Left ventricle myocardium superior (tissue), 1 donor: ENCODE measurements at regions of chr1 and their contacts with region 1.

Region 1: DNA sequence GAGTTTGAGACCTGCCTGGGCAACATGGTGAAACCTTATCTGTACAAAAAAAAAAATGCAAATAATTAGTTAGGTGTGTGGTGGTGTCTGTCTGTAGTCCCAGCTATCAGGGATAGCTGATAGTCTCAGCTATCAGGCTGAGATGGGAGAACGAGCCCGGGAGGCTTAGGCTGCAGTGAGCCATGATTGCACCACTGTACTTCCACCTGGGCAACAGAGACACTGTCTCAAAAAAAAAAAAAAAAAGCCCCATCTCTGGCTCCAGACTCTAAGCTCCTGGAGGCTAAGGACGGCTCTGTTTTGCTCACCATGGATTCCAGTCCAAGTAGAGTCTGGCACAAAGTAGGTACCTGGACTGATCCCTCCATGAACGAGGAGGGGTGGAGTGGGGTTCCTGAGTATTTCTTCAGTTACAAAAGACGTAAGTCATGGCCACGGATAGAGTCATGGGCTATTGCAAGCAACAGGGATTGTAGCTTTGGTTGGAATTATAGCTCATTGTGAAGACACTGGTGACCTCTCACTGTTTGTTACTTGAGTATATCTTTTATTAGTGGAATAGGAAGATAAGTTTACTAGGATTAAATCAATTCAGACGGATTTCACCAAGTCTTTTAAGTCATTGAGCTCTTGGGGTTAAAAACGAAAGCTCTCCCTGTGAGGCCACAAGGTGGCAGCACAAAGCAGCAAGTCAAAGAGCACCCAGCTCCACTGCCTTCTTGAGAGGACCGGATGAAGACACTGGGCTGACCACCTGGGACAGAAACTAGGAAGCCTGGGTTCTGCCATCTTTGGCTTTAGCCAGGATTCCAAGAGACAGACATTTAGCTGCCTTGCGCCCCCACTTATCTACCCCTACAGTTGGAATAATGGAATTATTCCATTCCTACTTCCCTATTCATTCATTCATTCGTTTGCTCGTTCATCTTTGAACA is 35.6 kb upstream of the TMEM61 start:
- DNase-seq: peak; percentile 77
- ATAC-seq: peak; percentile 79

Region 2: DNA sequence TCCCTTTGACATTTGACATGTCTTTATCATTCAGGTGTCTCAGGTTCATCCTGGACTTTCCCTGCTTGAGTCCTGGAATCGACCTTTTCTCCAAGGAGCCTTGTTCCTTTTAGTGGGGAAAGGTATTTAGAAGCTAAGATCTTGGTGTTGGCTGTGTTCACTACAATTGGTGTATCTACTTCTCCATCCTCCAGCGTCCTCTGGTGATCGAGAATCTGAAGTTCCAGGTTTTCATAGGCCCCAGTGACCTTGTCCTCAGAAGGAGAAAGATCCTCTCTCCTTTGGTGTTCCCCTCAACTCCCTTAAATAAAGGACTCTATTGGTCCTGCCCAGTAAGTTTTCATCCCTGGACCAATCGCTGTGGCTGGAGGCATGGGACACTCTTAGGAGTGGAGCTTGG is 281.2 kb before region 1 on chr1:
- intact Hi-C with region 1: no loop called
- DNase-seq: no peak
- ATAC-seq: no peak

Region 3: GRCh38 chr1:54698346-54698745 is 246.5 kb before region 1 on chr1:
- intact Hi-C with region 1: no loop called
- DNase-seq: no peak
- ATAC-seq: no peak

Region 4: DNA sequence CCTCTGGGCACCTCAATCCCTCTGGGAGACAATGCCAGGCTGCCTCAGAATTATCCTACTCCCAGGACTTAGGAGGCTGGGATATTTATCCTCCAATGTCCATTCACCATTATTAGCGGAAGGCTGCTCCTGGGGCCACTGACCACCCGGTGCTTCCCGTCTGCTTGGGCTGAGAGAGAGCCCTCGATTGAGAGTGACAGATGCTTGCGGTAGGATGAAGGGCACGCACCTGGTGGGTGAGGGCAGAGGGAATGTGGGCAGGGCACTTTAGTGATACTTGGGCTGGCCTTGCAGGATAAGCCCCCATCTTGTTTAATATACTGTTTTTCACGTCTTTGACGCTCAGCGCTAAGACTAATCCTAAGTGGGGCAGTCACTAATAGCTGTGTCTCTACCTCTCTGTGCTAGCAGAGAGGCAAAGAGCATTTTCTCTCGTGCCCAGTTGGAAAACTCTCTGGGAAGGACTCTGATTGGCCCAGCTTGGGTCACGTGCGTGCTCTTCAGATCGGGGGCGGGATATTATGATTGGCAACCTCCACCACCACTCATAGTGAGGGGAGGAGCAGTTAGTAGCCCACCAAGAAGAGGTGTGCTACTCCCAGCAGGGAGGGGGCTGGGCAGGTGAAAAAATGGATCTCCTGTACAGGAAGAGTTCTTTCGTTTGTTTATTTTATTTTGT is 169.9 kb before region 1 on chr1:
- intact Hi-C with region 1: no loop called
- DNase-seq: no peak
- ATAC-seq: no peak

Region 5: DNA sequence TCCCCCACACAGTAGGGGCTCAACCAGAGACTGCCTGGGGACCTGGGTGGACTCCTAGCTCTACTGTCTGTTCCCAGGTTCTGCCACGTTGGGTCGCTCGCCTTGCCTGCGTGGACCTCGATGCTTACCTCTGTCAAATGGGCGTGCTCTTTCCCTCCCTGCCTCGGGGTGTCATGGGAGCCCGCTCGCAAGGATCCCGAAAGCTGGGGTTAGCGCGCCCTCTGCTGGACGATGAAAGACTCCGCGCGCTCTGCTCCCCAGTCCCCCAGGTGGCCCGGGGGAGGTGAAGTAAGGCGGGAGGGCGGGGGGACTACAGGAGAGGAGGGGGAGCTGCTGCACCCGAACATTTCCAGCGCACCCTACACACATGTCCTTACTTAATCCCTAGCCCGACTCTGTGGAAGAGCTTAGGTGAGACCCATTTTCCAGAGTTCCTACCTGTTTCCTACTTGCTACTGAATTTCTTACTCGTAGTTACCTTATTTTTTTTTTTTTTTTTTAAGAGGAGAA is 51.5 kb after region 1 on chr1:
- intact Hi-C with region 1: loop called (anchors 2 kb)
- DNase-seq: peak; percentile 75
- ATAC-seq: peak; percentile 88